CD4-positive, alpha-beta memory T cell (primary cell): ENCODE measurements at regions of chr17 and their contacts with region 1.

Region 1: GRCh38 chr17:17591355-17592298 is at the start of gene PEMT:
- DNase-seq: peak; percentile 94 to 97 (median 94)
- H3K4me3 ChIP-seq: peak within 1 kb of the TSS; percentile 86 to 99
- H3K4me3 Mint-ChIP-seq: peak within 1 kb of the TSS; percentile 93 to 97 (median 95)
- H3K27ac ChIP-seq: peak within 1 kb of the TSS; percentile 73
- H3K27ac Mint-ChIP-seq: peak within 1 kb of the TSS; percentile 84 to 99 (median 96)
- H3K4me1 ChIP-seq: peaks cover 21% of the 10 kb centered on the region
- H3K4me1 Mint-ChIP-seq: peaks cover 11 to 29% (median 18%) of the 10 kb centered on the region in 4 donors
- H3K27me3 ChIP-seq: no peaks in the 10 kb centered on the region
- H3K27me3 Mint-ChIP-seq: no peaks in the 10 kb centered on the region
- total RNA-seq, gene PEMT: 11.6 to 13.8 TPM

Region 2: GRCh38 chr17:17476865-17477467 is 114.7 kb before region 1 on chr17 and contains the start of gene MED9:
- CTCF ChIA-PET with region 1: no interaction called
- POLR2A ChIA-PET with region 1: no interaction called
- intact Hi-C with region 1: loop called (anchors 1 kb)
- DNase-seq: peak; percentile 92 to 94 (median 93)
- H3K4me3 ChIP-seq: peak within 1 kb of the TSS; percentile 87 to 99
- H3K4me3 Mint-ChIP-seq: peak within 1 kb of the TSS; percentile 89 to 95 (median 91)
- H3K27ac ChIP-seq: peak within 1 kb of the TSS; percentile 76
- H3K27ac Mint-ChIP-seq: peak within 1 kb of the TSS; percentile 84 to 97 (median 94)
- H3K4me1 ChIP-seq: peaks cover 45% of the 10 kb centered on the region
- H3K4me1 Mint-ChIP-seq: peaks cover 23 to 55% (median 42%) of the 10 kb centered on the region in 4 donors
- H3K27me3 ChIP-seq: no peaks in the 10 kb centered on the region
- H3K27me3 Mint-ChIP-seq: peaks cover 7 to 12% of the 10 kb centered on the region in 2 donors
- total RNA-seq, gene MED9: 17.1 to 18.9 TPM

Region 3: GRCh38 chr17:17570798-17571716 is 20.6 kb before region 1 on chr17:
- CTCF ChIA-PET with region 1: no interaction called
- POLR2A ChIA-PET with region 1: no interaction called
- intact Hi-C with region 1: no loop called
- DNase-seq: no peak
- H3K4me3 ChIP-seq: no peak overlapping the region
- H3K4me3 Mint-ChIP-seq: no peak overlapping the region
- H3K27ac ChIP-seq: no peak overlapping the region
- H3K27ac Mint-ChIP-seq: no peak overlapping the region
- H3K4me1 ChIP-seq: no peaks in the 10 kb centered on the region
- H3K4me1 Mint-ChIP-seq: peaks cover 0 to 4% (median 1%) of the 10 kb centered on the region in 4 donors
- H3K27me3 ChIP-seq: no peaks in the 10 kb centered on the region
- H3K27me3 Mint-ChIP-seq: no peaks in the 10 kb centered on the region

Region 4: DNA sequence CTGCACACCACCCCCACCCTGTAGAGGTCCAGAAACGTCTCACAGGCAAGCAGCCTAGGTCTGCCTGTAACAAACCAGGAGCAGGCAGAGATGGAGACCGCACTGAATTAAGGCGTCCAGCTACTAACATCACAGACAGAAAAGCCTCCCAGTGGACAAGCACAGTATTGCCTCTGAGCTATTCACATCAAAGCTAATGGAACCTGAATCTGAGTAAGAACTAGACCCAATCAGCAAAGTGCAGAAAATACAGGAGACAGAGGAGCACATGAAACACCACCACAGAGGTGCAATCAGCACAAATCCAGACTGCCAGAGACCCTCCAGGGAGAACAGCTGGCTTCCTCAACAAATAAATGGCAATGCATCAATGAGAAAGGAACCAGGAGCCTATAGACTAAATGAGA is 22.1 kb after region 1 on chr17:
- CTCF ChIA-PET with region 1: interaction called, 6 read pairs
- POLR2A ChIA-PET with region 1: interaction called, 12 read pairs
- intact Hi-C with region 1: no loop called
- DNase-seq: peak; percentile 20 to 52 (median 42)
- H3K4me3 ChIP-seq: no peak overlapping the region
- H3K4me3 Mint-ChIP-seq: peak overlapping the region in 1 of 8 donors; percentile 39
- H3K27ac ChIP-seq: no peak overlapping the region
- H3K27ac Mint-ChIP-seq: no peak overlapping the region
- H3K4me1 ChIP-seq: no peaks in the 10 kb centered on the region
- H3K4me1 Mint-ChIP-seq: peaks cover 0 to 6% (median 3%) of the 10 kb centered on the region in 4 donors
- H3K27me3 ChIP-seq: no peaks in the 10 kb centered on the region
- H3K27me3 Mint-ChIP-seq: no peaks in the 10 kb centered on the region

Region 5: GRCh38 chr17:17694169-17695081 is 102.8 kb after region 1 on chr17:
- CTCF ChIA-PET with region 1: no interaction called
- POLR2A ChIA-PET with region 1: interaction called, 3 read pairs
- intact Hi-C with region 1: loop called (anchors 1 kb)
- DNase-seq: peak; percentile 71 to 85 (median 77)
- H3K4me3 ChIP-seq: peak overlapping the region; percentile 38 to 63
- H3K4me3 Mint-ChIP-seq: peak overlapping the region; percentile 87 to 93 (median 89)
- H3K27ac ChIP-seq: peak overlapping the region; percentile 92
- H3K27ac Mint-ChIP-seq: peak overlapping the region; percentile 97 to 99 (median 99)
- H3K4me1 ChIP-seq: peaks cover 35% of the 10 kb centered on the region
- H3K4me1 Mint-ChIP-seq: peaks cover 16 to 66% (median 34%) of the 10 kb centered on the region in 4 donors
- H3K27me3 ChIP-seq: no peaks in the 10 kb centered on the region
- H3K27me3 Mint-ChIP-seq: no peaks in the 10 kb centered on the region

Region 6: DNA sequence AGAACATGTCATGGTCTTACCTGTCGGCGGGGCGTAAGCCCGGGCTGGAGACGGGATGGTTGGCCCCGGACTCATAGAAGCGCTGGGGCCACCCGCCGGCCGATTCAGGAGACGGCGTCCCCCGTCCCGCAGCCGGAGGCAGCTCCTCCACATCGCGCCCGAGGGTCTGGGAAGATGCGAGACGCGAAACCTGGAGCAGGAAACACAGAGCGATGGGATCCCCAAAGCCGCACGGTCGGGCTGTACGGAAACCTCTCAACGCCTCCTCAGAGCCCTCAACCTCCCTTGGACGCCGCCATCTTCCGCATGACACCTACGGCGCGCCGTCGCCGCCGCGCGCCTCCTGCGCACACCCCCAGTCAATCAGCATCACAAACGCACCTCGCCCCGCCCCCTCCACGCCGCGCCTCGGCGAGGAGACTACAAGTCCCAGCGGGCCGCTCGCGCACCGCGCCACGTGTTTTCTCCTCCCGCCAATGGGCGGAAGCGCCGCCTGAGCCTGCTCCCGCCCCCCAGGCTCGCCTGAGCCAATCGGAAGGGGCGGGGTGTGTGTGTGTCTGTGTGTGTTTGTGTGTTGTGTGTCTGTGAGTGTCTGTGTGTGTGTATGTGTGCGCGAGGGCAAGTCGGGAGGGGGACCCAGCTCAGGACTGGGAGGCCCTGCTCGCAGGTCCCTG is 447.4 kb after region 1 on chr17 and contains the starts of genes ATPAF2 and GID4:
- CTCF ChIA-PET with region 1: no interaction called
- POLR2A ChIA-PET with region 1: no interaction called
- intact Hi-C with region 1: loop called (anchors 2 kb)
- DNase-seq: peak; percentile 99 to 100 (median 100)
- H3K4me3 ChIP-seq: peak within 1 kb of the TSS; percentile 72 to 79
- H3K4me3 Mint-ChIP-seq: peak within 1 kb of the TSS; percentile 92 to 100 (median 100)
- H3K27ac ChIP-seq: peak within 1 kb of the TSS; percentile 73
- H3K27ac Mint-ChIP-seq: peak within 1 kb of the TSS; percentile 80 to 100 (median 99)
- H3K4me1 ChIP-seq: peaks cover 26% of the 10 kb centered on the region
- H3K4me1 Mint-ChIP-seq: peaks cover 34 to 60% (median 48%) of the 10 kb centered on the region in 4 donors
- H3K27me3 ChIP-seq: no peaks in the 10 kb centered on the region
- H3K27me3 Mint-ChIP-seq: no peaks in the 10 kb centered on the region
- total RNA-seq, gene ATPAF2: 24.1 to 24.3 TPM
- total RNA-seq, gene GID4: 11.1 to 13.1 TPM